PC-3 (cell line): ENCODE measurements at regions of chr20 and their contacts with region 1.

Region 1: GRCh38 chr20:45337367-45338120 is 10.7 kb downstream of the SDC4 start:
- DNase-seq: peak; percentile 78
- ATAC-seq: peak; percentile 11
- H3K4me3 ChIP-seq: peak overlapping the region; percentile 15; the same call in 1 of the 2 replicates
- H3K27ac ChIP-seq: peak overlapping the region; percentile 95
- H3K4me1 ChIP-seq: peaks cover 70% of the 10 kb centered on the region
- H3K27me3 ChIP-seq: no peaks in the 10 kb centered on the region
- CTCF ChIP-seq: no peak

Region 2: GRCh38 chr20:45313065-45313695 is 24.4 kb before region 1 on chr20:
- CTCF ChIA-PET with region 1: no interaction called
- POLR2A ChIA-PET with region 1: no interaction called
- intact Hi-C with region 1: no loop called
- DNase-seq: no peak
- ATAC-seq: no peak
- H3K4me3 ChIP-seq: no peak overlapping the region
- H3K27ac ChIP-seq: no peak overlapping the region
- H3K4me1 ChIP-seq: no peaks in the 10 kb centered on the region
- H3K27me3 ChIP-seq: no peaks in the 10 kb centered on the region
- CTCF ChIP-seq: no peak

Region 3: DNA sequence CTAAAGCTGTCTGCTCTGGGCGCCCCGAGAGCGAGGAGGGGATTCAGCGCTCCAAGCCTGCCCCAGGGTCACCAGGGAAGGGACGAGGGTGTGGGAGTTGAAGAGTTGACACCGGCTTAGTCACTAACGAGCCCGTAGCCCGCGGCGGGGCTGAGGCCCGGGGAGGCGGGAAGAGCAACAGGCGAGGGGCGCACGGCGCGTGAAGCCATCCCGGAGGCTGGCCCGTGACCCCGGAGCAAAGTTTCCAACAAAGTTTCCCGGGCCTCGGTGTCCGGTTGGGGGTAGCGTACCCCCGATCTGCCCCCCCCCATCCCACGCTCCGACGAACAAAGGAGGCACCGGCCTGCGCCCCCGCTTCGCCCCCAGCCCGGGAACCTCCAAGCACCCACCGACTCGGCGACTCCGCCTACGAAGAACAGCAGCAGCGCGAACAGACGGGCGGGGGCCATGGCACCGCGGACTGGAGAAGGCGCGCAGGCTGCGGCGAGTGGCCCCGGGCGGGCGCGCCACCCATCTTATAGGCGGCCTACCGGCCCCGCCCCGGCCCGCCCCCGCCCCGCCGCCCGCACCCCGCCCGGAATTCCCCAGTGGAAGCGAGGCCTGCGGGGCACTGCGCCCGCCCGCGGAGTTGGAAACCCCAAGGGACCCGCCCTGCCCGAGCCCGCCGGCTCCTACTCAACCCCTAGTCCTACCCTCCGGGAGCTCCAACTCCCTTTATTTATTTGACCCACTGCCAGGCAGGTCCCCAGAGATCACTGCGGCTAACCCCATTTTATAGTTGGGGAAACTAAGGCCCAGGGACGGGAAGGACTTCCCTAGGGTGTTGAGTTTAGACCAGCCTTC is 10.6 kb after region 1 on chr20 and contains the start of gene SDC4:
- CTCF ChIA-PET with region 1: no interaction called
- POLR2A ChIA-PET with region 1: interaction called, 3 read pairs
- intact Hi-C with region 1: loop called (anchors 1 kb)
- DNase-seq: peak; percentile 71
- ATAC-seq: peak; percentile 20
- H3K4me3 ChIP-seq: peak within 1 kb of the TSS; percentile 97
- H3K27ac ChIP-seq: peak within 1 kb of the TSS; percentile 95
- H3K4me1 ChIP-seq: peaks cover 45% of the 10 kb centered on the region
- H3K27me3 ChIP-seq: no peaks in the 10 kb centered on the region
- CTCF ChIP-seq: no peak
- total RNA-seq, gene SDC4: 134 and 167 TPM in 2 replicates

Region 4: DNA sequence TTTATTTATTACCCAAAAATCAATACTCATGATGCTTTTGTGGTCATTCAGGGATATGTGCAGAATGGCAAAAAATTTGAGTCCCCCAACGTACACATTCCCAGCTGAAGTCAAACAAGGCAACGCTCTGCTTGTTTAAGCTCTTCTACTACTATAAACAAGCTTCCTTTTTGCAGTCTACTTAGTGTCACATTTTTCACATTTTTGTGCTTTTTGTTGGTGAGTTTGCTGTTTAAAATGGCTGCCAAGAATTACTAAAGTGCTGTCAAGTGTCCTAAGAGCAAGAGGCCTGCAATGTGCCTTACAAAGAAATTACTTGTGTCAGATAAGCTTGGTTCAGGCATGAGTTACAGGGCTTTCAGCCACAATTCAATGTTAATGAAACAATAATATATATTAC is 239.5 kb after region 1 on chr20:
- CTCF ChIA-PET with region 1: no interaction called
- POLR2A ChIA-PET with region 1: no interaction called
- intact Hi-C with region 1: no loop called
- DNase-seq: no peak
- ATAC-seq: no peak
- H3K4me3 ChIP-seq: no peak overlapping the region
- H3K27ac ChIP-seq: no peak overlapping the region
- H3K4me1 ChIP-seq: no peaks in the 10 kb centered on the region
- H3K27me3 ChIP-seq: peaks cover 30% of the 10 kb centered on the region
- CTCF ChIP-seq: no peak